ENCODE measurements at regions of chr5 and their contacts with region 1.

Region 1: DNA sequence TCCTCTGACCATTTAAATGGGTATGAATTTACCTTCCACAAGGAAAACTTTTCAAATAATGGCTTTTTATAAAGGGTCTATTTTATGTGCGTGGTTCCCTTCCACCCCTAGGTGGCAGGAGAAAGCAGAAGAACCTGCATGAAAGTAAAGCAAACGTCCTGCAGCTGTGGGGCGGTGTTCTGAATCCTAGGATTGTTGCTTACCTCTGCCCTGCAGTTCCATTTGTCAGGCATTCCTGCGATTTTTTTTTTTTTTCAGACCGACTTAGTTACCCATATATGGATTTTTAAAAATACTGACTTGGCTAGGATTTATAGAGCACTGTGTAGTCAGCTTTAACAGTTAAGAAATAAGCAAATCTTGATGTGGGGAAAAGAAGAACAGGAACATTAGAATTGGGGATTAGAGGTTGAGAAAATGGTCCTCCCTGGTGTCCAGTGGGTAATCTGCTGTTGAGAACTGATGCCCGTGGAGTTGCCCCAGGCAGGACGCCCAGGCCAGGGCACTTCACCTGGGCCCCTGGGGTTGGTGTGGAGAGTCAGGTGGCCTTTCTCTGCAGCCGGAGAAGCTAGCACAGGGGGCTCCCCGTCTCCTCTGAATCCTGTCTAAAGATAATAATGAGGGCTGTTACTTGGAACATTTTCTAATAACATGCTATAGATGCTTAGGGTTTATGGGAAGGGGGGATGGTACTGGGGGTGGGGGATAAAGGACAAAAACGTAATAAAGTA is 30.4 kb upstream of the LTC4S start:
- DNase-seq: peak; percentile 73
- CTCF ChIP-seq: peak; percentile 84

Region 2: DNA sequence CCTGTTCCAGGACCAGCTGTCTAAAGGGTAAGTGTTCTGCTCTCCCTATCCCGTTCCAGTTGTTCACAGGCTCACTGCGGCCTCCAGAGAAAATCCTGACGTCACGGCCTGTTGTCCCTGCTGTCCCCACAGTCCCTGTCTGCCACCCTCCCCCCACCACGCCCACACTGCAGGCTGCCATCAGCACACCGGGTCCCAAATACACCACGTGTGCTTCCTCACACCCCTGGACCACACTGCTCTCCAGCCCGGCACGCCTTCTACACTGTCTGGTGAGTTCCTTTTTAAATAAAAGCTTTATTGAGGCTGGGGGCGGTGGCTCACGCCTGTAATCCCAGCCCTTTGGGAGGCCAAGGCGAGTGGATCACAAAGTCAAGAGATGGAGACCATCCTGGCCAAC is 301.3 kb before region 1 on chr5:
- CTCF ChIA-PET with region 1: no interaction called
- POLR2A ChIA-PET with region 1: no interaction called
- DNase-seq: no peak
- CTCF ChIP-seq: no peak

Region 3: GRCh38 chr5:179732417-179732917 is 30.9 kb before region 1 on chr5 and contains the start of gene MAML1:
- CTCF ChIA-PET with region 1: interaction called, 49 read pairs
- POLR2A ChIA-PET with region 1: interaction called, 3 read pairs
- DNase-seq: peak; percentile 99
- CTCF ChIP-seq: no peak

Region 4: GRCh38 chr5:179738742-179739141 is 24.6 kb before region 1 on chr5:
- CTCF ChIA-PET with region 1: interaction called, 49 read pairs
- POLR2A ChIA-PET with region 1: interaction called, 3 read pairs
- DNase-seq: no peak
- CTCF ChIP-seq: no peak

Region 5: DNA sequence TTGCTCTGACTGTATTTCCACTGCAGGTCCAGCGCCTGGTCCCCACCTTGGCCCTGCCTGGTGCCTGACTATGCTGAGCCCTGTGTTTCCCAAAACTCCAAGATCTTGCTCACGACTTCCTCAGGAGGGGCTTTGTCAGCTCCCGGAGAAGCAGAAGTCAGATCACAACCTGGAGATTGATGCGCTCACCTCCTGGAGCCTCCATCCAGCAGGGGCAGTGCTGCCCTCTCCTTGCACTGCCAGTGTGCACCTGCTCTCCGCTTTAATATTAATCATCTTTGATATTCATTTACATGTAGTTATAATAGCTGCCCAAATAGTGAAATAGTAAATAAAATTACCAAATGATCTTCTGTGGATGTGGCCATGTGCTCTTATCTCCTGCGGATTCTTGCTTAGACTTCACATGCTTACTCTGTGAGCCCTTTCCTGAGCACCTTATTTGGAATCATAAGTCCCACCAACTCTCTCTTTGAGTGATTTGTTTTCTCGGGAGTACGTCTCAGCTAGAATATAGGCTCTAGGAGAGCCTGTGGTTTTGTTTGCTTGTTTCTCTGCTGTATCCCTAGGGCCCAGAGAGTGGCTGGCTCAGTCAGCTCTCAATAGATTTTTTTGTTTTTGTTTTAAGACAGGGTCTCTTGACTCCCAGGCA is 13.4 kb before region 1 on chr5:
- CTCF ChIA-PET with region 1: interaction called, 28 read pairs
- POLR2A ChIA-PET with region 1: interaction called, 3 read pairs
- DNase-seq: no peak
- CTCF ChIP-seq: no peak

Region 6: GRCh38 chr5:179780362-179780761 is 17.0 kb after region 1 on chr5:
- CTCF ChIA-PET with region 1: interaction called, 48 read pairs
- POLR2A ChIA-PET with region 1: interaction called, 3 read pairs
- DNase-seq: no peak
- CTCF ChIP-seq: no peak

Region 7: GRCh38 chr5:179788193-179788854 is 24.9 kb after region 1 on chr5:
- CTCF ChIA-PET with region 1: interaction called, 48 read pairs
- POLR2A ChIA-PET with region 1: no interaction called
- DNase-seq: no peak
- CTCF ChIP-seq: no peak

Region 8: DNA sequence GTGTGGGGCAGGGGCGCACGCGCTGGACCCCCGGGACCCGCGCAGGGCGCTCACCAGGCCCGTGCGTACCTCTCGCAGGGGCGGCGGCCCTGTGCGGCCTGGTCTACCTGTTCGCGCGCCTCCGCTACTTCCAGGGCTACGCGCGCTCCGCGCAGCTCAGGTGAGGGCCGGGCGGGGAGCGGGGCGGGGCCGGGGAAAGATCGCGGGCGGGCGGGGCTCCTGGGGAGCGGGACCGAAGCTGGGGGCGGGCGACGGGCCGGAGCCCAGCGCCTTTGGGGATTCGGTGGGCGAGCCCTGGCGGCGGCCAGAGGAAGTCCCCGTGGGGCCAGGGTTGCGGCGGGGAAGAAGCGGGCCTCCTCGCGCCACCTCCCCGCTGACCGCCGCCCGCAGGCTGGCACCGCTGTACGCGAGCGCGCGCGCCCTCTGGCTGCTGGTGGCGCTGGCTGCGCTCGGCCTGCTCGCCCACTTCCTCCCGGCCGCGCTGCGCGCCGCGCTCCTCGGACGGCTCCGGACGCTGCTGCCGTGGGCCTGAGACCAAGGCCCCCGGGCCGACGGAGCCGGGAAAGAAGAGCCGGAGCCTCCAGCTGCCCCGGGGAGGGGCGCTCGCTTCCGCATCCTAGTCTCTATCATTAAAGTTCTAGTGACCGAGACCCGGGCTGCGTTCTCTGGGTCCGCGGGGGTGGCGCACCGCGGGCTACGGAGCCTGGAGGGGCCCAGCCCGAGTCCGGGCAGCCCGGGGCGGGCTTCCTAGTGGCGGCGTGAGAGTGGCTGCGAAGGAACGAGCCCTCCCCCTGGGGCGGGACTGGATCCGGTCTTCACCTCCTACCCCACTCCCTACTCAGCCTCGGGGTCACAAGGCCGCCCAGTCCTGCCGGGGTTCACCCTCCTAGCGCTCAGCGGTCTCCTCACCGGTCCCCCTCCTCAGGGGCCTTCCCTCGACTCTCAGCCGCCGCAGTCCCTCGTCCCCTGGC is 32.8 kb after region 1 on chr5:
- CTCF ChIA-PET with region 1: interaction called, 33 read pairs
- POLR2A ChIA-PET with region 1: no interaction called
- DNase-seq: peak; percentile 83
- CTCF ChIP-seq: peak; percentile 95